ENCODE measurements at regions of chr4 and their contacts with region 1.

Region 1: DNA sequence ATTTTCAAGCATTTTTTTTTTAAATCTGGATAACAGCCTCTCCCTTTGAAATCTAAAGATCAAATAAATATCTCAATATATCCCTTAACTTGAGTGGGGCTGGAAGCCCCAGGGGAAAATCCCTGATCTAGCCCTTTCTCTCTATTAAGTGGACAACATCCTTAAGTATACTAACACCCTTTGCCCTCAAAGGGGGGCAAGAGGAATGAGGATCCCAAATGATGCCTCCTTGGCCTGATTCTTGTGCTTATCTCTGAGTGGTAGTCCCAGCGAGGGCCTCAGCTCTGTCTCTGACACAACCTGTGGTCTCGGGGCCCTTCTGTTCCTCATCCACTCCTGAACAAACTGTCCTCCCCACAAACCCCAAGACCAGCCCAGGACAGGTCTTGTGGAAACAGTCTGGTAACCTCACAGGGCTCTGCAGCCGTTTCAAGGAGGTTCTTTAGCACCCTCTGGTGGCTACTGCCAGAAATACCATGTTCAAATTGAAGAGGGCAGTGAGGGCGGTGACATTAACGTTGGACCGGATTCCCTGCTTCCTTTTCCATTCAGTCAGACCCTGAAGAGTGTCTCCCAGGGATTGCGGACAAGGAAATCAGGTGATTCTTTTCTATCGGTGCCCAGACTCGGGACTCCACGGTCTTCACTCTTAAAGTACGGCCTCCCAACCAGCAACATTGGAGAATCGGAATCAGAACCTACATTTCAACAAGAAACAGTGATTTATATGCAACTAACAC is 12.9 kb downstream of the CXCL13 start:
- DNase-seq: peak; percentile 75
- H3K4me3 ChIP-seq: no peak overlapping the region
- H3K27ac ChIP-seq: no peak overlapping the region
- H3K4me1 ChIP-seq: no peaks in the 10 kb centered on the region
- H3K27me3 ChIP-seq: peaks cover 2 to 8% of the 10 kb centered on the region in 2 experiments
- CTCF ChIP-seq: peak; percentile 84 to 90
- POLR2A ChIP-seq: no peak

Region 2: GRCh38 chr4:77385124-77385969 is 233.2 kb before region 1 on chr4:
- CTCF ChIA-PET with region 1: interaction called, 7 read pairs
- POLR2A ChIA-PET with region 1: no interaction called
- dilution Hi-C with region 1: no loop called
- intact Hi-C with region 1: loop called (anchors 1 kb)
- DNase-seq: peak; percentile 71
- H3K4me3 ChIP-seq: no peak overlapping the region
- H3K27ac ChIP-seq: no peak overlapping the region
- H3K4me1 ChIP-seq: no peaks in the 10 kb centered on the region
- H3K27me3 ChIP-seq: peaks cover 6 to 14% of the 10 kb centered on the region in 2 experiments
- CTCF ChIP-seq: peak; percentile 81
- POLR2A ChIP-seq: no peak

Region 3: DNA sequence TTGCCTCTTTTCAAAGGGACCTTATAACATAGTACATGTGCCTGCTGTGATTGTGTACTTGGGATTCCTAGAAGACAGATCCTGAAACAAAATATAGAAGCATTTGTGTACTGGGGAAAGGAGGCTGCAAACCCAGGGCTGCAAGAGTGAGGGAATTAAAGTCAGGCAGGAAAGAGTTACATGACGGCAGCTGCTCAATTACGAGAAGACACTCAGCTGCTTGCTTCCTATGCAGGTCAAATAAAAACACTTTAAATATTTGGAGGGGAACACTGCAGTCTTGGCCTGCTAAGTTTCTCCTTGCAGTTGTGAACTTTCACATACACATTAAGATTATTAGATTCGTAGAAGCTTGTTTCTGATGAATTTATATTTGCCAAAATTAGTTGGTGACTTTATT is 204.8 kb before region 1 on chr4:
- CTCF ChIA-PET with region 1: no interaction called
- POLR2A ChIA-PET with region 1: no interaction called
- dilution Hi-C with region 1: no loop called
- intact Hi-C with region 1: no loop called
- DNase-seq: no peak
- H3K4me3 ChIP-seq: no peak overlapping the region
- H3K27ac ChIP-seq: no peak overlapping the region
- H3K4me1 ChIP-seq: no peaks in the 10 kb centered on the region
- H3K27me3 ChIP-seq: peaks cover 3 to 9% of the 10 kb centered on the region in 2 experiments
- CTCF ChIP-seq: no peak
- POLR2A ChIP-seq: no peak

Region 4: GRCh38 chr4:77590495-77590894 is 28.1 kb before region 1 on chr4:
- CTCF ChIA-PET with region 1: no interaction called
- POLR2A ChIA-PET with region 1: no interaction called
- dilution Hi-C with region 1: no loop called
- intact Hi-C with region 1: no loop called
- DNase-seq: no peak
- H3K4me3 ChIP-seq: no peak overlapping the region
- H3K27ac ChIP-seq: no peak overlapping the region
- H3K4me1 ChIP-seq: no peaks in the 10 kb centered on the region
- H3K27me3 ChIP-seq: no peaks in the 10 kb centered on the region
- CTCF ChIP-seq: no peak
- POLR2A ChIP-seq: no peak

Region 5: GRCh38 chr4:77629885-77630284 is 11.3 kb after region 1 on chr4:
- CTCF ChIA-PET with region 1: interaction called, 11 read pairs
- POLR2A ChIA-PET with region 1: no interaction called
- dilution Hi-C with region 1: no loop called
- intact Hi-C with region 1: no loop called
- DNase-seq: no peak
- H3K4me3 ChIP-seq: no peak overlapping the region
- H3K27ac ChIP-seq: no peak overlapping the region
- H3K4me1 ChIP-seq: no peaks in the 10 kb centered on the region
- H3K27me3 ChIP-seq: no peaks in the 10 kb centered on the region
- CTCF ChIP-seq: no peak
- POLR2A ChIP-seq: no peak

Region 6: DNA sequence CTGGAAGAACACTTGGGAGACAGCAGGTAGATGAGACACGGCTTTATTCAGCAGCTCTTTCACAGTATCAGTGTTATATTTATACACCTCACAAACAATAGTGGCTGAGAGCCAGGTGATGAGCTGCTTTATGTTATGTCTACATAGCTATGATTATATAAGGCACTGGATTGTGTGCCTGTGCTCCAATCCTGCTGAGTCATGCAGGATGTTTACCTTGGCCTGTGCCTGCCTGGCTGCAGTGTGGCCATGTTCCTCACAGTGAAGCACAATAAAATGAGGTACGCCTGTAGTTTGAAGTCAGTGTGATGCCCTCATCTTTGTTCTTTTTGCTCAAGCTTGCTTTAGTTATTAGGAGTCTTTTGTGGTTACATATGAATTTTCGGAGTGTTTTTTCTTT is 18.3 kb after region 1 on chr4:
- CTCF ChIA-PET with region 1: interaction called, 13 read pairs
- POLR2A ChIA-PET with region 1: no interaction called
- dilution Hi-C with region 1: no loop called
- intact Hi-C with region 1: no loop called
- DNase-seq: peak; percentile 97
- H3K4me3 ChIP-seq: no peak overlapping the region
- H3K27ac ChIP-seq: peak overlapping the region; percentile 51
- H3K4me1 ChIP-seq: peaks cover 10% of the 10 kb centered on the region
- H3K27me3 ChIP-seq: peaks cover 0 to 1% of the 10 kb centered on the region in 2 experiments
- CTCF ChIP-seq: no peak
- POLR2A ChIP-seq: no peak

Region 7: GRCh38 chr4:77728420-77728819 is 109.9 kb after region 1 on chr4:
- CTCF ChIA-PET with region 1: no interaction called
- POLR2A ChIA-PET with region 1: no interaction called
- dilution Hi-C with region 1: no loop called
- intact Hi-C with region 1: no loop called
- DNase-seq: no peak
- H3K4me3 ChIP-seq: no peak overlapping the region
- H3K27ac ChIP-seq: no peak overlapping the region
- H3K4me1 ChIP-seq: no peaks in the 10 kb centered on the region
- H3K27me3 ChIP-seq: no peaks in the 10 kb centered on the region
- CTCF ChIP-seq: no peak
- POLR2A ChIP-seq: no peak